Activated CD4-positive, alpha-beta memory T cell treated with anti-CD3 and anti-CD28 coated beads, Interleukin-2, amount 10 ng/mL, durations not matched to agents 7 days and 5 days (primary cell): ENCODE measurements at regions of chr15 and their contacts with region 1.

Region 1: GRCh38 chr15:78108299-78109084 is 16.1 kb downstream of the SH2D7 start:
- DNase-seq: peak; percentile 88
- H3K4me3 Mint-ChIP-seq: no peak overlapping the region
- H3K27ac Mint-ChIP-seq: no peak overlapping the region
- H3K4me1 Mint-ChIP-seq: peaks cover 51% of the 10 kb centered on the region
- H3K27me3 Mint-ChIP-seq: no peaks in the 10 kb centered on the region

Region 2: GRCh38 chr15:77738441-77739302 is 369.8 kb before region 1 on chr15:
- CTCF ChIA-PET with region 1: no interaction called
- POLR2A ChIA-PET with region 1: no interaction called
- DNase-seq: no peak
- H3K4me3 Mint-ChIP-seq: no peak overlapping the region
- H3K27ac Mint-ChIP-seq: no peak overlapping the region
- H3K4me1 Mint-ChIP-seq: no peaks in the 10 kb centered on the region
- H3K27me3 Mint-ChIP-seq: peaks cover 29% of the 10 kb centered on the region

Region 3: GRCh38 chr15:77966540-77967290 is 141.8 kb before region 1 on chr15:
- CTCF ChIA-PET with region 1: interaction called, 112 read pairs
- POLR2A ChIA-PET with region 1: interaction called, 3 read pairs
- DNase-seq: peak; percentile 54
- H3K4me3 Mint-ChIP-seq: no peak overlapping the region
- H3K27ac Mint-ChIP-seq: no peak overlapping the region
- H3K4me1 Mint-ChIP-seq: peaks cover 9% of the 10 kb centered on the region
- H3K27me3 Mint-ChIP-seq: peaks cover 28% of the 10 kb centered on the region

Region 4: GRCh38 chr15:78018946-78019644 is 89.4 kb before region 1 on chr15:
- CTCF ChIA-PET with region 1: interaction called, 14 read pairs
- POLR2A ChIA-PET with region 1: no interaction called
- DNase-seq: no peak
- H3K4me3 Mint-ChIP-seq: no peak overlapping the region
- H3K27ac Mint-ChIP-seq: peak overlapping the region; percentile 23
- H3K4me1 Mint-ChIP-seq: peaks cover 22% of the 10 kb centered on the region
- H3K27me3 Mint-ChIP-seq: no peaks in the 10 kb centered on the region

Region 5: DNA sequence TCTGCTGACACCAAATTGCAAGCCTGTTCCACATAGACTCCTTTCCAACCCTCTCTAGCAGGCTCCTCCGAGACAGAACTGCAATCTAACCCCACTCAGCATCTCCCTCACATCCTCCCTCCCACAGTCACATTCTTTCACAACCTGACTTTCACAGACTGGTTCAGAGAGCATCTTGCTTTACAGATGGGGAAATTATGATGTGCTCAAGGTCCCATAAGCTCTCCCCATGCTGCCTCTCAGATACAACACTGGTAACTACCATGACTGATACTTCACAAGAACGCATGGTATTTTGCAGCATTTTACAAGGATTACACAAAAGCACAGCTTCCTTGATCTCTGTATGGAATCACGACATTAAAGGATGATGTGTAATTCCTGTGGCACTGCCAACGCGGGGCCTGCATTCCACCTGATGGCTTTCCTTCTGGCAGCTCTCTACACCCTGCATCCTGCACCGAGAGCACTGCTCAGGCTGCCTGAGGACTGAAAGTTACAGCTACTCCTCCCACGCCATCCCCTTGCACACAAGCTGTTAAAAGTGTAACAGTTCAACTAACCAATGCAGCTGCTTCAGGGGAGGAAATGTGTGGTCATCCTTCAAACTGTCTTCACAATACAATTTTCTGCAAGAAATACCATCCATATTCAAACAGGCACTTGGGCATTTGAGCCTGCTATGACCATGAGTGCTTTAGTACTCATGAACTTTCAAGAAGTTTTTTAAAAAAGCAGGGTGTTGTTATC is 58.6 kb before region 1 on chr15:
- CTCF ChIA-PET with region 1: interaction called, 48 read pairs
- POLR2A ChIA-PET with region 1: interaction called, 22 read pairs
- DNase-seq: peak; percentile 75
- H3K4me3 Mint-ChIP-seq: peak overlapping the region; percentile 54
- H3K27ac Mint-ChIP-seq: peak overlapping the region; percentile 91
- H3K4me1 Mint-ChIP-seq: peaks cover 96% of the 10 kb centered on the region
- H3K27me3 Mint-ChIP-seq: no peaks in the 10 kb centered on the region

Region 6: DNA sequence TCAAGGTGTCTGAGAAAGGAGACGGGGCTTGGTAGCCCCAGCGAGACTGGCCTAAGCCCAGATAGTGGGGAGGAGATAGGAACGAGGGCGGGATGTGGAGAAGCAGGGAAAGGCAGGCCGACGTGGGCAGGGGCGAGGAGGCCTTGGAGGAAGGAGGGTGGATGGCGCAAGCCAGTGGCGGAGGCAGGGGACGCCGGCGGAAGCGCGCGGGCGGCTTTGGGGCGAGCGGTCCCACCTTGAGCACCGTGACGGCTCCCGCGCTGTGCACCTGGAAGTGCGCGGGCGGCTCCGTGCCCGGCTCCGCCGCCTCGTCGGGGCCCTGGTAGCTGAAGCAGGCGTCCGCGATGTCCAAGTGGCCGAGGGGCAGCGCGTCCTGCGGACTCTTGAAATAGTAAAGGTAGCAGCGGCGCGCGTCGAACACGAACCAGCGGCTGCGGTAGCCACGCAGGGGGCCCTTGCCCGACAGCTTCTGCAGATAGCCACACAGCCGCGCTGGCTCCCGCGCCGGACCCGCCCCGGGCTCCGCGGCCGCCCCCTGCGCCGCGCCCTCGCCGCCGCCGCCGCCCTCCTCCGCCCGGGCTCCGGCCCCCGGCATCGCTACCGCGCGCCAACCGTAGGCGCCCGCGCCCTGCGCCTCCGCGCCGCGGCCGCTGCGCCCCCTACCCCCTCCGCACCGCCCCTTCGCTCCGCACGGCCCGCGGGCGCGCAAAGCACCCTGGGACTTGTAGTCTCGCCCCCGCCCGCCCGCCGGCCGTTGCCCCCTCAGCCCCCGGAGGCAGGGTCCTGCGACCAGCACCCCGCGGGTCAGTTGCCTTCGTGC is 31.2 kb before region 1 on chr15 and contains the start of gene TBC1D2B:
- CTCF ChIA-PET with region 1: interaction called, 61 read pairs
- POLR2A ChIA-PET with region 1: interaction called, 7 read pairs
- DNase-seq: peak; percentile 74
- H3K4me3 Mint-ChIP-seq: peak within 1 kb of the TSS; percentile 100
- H3K27ac Mint-ChIP-seq: peak within 1 kb of the TSS; percentile 89
- H3K4me1 Mint-ChIP-seq: peaks cover 48% of the 10 kb centered on the region
- H3K27me3 Mint-ChIP-seq: no peaks in the 10 kb centered on the region
- total RNA-seq, gene TBC1D2B: 97.1 to 101 TPM

Region 7: DNA sequence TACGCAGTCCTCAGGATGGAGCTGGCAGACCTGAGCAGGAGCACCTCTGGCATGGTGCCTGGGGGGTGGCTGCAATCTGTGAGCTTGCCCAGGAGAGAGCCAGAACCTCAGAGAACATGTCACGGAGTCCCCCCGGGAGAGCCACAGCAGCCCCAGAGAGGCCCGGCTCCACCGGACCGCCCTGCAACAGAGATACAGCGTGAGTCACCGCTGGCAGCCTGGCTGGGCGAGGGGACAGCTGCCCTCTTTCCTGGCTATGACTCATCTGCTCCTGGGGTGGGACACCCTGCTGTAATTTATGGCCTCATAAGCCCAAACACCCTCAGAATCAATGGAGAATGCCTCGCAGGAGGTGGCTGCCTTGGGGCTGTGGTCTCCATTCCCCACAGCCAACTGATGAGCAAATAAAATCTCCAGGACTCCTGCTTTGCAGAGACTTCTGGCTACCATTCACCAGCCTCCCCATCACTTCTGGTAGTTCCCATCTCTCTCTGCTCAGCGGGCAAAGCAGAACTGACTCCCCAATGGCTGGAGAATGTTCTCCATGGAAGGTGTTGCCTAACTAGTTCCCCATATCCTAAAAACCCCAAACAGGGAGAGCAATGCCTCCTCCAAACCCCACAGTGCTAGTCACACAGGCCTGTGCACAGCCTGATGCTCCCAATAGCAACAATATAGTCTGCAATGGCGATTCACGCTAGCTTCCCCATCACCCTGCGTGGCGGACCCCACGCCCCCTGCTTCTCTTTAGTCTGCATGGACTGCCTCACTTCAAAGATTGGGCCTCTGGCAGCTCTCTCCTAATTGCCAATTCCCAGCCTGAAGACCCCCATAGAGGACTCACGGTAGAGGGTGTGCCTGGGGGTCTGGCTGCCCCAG is 104.3 kb after region 1 on chr15:
- CTCF ChIA-PET with region 1: no interaction called
- POLR2A ChIA-PET with region 1: no interaction called
- DNase-seq: no peak
- H3K4me3 Mint-ChIP-seq: no peak overlapping the region
- H3K27ac Mint-ChIP-seq: no peak overlapping the region
- H3K4me1 Mint-ChIP-seq: no peaks in the 10 kb centered on the region
- H3K27me3 Mint-ChIP-seq: peaks cover 15% of the 10 kb centered on the region

Region 8: DNA sequence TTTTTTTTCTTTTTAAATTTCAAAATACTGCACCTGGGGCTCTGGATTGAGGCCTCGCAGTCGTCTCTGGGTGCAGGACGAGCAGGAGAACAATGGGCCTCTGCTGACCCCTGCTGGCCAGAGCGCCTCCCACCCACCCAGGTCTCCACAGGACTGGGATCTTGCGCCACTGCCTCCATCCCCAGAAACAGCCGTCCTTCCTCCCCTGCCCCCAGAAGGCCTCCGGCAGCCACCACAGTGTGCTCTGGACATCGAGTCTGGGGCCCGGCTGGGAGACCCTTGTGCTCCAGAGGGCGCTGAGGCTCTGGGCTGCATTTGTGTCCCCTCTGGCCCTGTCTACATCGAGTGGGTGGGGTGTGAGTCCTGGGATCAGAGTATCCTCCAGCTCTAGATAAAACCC is 132.5 kb after region 1 on chr15:
- CTCF ChIA-PET with region 1: interaction called, 97 read pairs
- POLR2A ChIA-PET with region 1: no interaction called
- DNase-seq: peak; percentile 85
- H3K4me3 Mint-ChIP-seq: no peak overlapping the region
- H3K27ac Mint-ChIP-seq: no peak overlapping the region
- H3K4me1 Mint-ChIP-seq: peaks cover 2% of the 10 kb centered on the region
- H3K27me3 Mint-ChIP-seq: peaks cover 14% of the 10 kb centered on the region